Breast epithelium (tissue), 4 donors: ENCODE measurements at regions of chr1 and their contacts with region 1.

Region 1: DNA sequence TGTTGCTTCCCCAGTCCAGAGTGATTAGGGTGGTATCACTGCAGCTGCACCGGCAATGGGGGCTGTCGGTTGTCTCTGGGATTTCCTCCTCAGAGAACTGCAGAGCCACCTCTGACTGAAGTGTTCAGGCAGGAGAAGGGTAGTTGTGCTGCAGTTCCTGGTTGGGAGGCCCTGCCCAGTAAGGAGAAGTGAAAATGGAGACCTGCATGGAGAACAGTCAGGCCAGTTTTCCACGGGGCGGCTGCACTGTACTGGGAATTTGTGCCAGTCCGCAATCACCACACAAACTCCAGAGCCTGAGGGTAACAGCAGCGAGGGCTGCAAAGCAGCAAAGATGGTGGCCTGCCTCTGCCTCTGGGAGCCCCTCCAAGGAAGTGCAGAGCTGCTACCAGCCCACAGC is 58.1 kb upstream of the CCDC190 start:
- DNase-seq: no peak
- H3K4me3 ChIP-seq: no peak overlapping the region
- H3K27ac ChIP-seq: no peak overlapping the region
- H3K4me1 ChIP-seq: no peaks in the 10 kb centered on the region
- H3K27me3 ChIP-seq: no peaks in the 10 kb centered on the region
- CTCF ChIP-seq: no peak
- POLR2A ChIP-seq: no peak

Region 2: GRCh38 chr1:162892906-162893611 is 26.0 kb before region 1 on chr1:
- intact Hi-C with region 1: no loop called
- DNase-seq: no peak
- H3K4me3 ChIP-seq: no peak overlapping the region
- H3K27ac ChIP-seq: no peak overlapping the region
- H3K4me1 ChIP-seq: no peaks in the 10 kb centered on the region
- H3K27me3 ChIP-seq: no peaks in the 10 kb centered on the region
- CTCF ChIP-seq: no peak
- POLR2A ChIP-seq: no peak

Region 3: DNA sequence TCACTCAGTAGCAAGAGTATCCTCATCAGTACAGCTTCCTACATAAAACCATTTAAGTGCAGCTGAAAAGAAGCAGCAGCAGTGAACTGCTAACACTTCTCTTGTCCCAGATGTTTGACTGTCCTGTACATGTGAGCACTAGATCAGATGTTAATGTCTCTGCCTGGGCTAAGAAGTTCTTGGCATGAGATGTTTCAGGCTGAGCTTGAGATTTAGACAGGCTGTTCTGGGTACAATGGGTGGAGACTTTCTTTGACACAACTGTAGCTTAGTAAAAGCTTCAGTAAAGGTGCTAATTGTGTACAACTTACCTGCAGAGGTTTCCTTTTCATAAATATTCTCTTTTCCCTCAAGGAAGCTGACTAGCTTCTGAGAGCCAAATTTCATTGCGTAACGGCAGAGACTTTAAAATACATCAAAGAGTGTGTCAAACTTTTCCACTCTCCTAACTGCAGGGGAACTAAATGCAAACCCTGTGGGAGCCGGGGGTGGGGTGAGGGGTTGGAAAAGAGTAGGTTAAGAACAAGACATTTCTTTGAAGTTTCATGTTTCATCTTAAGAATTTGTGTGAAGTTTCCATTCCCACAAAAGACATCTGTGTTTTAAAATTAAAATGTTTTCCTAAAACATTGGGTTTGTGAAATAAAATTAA is 24.0 kb after region 1 on chr1:
- intact Hi-C with region 1: loop called (anchors 1 kb)
- DNase-seq: no peak
- H3K4me3 ChIP-seq: no peak overlapping the region
- H3K27ac ChIP-seq: peak overlapping the region; percentile 41 to 56
- H3K4me1 ChIP-seq: no peaks in the 10 kb centered on the region
- H3K27me3 ChIP-seq: no peaks in the 10 kb centered on the region
- CTCF ChIP-seq: no peak
- POLR2A ChIP-seq: no peak

Region 4: DNA sequence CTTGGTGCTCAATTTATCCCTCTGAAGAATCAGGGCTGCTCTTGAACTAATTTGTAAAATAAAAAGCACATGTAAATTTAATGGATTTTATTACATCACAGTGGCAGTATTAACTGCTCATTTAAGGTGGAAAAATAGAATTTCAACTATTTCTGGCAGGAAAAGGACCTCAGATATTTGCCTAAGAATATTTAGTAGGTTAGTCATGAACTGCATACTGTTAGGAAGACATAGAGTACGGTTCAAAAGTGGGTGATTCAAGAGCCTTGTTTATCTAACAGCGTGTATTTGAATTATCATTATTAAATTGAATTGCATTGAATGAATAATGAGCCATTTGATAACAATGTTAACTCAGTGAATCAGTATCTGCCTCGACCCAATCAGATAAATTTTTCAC is 1391.1 kb after region 1 on chr1:
- intact Hi-C with region 1: no loop called
- DNase-seq: no peak
- H3K4me3 ChIP-seq: no peak overlapping the region
- H3K27ac ChIP-seq: no peak overlapping the region
- H3K4me1 ChIP-seq: no peaks in the 10 kb centered on the region
- H3K27me3 ChIP-seq: no peaks in the 10 kb centered on the region
- CTCF ChIP-seq: no peak
- POLR2A ChIP-seq: no peak